Endothelial cell of umbilical vein (primary cell): ENCODE measurements at regions of chr1 and their contacts with region 1.

Region 1: DNA sequence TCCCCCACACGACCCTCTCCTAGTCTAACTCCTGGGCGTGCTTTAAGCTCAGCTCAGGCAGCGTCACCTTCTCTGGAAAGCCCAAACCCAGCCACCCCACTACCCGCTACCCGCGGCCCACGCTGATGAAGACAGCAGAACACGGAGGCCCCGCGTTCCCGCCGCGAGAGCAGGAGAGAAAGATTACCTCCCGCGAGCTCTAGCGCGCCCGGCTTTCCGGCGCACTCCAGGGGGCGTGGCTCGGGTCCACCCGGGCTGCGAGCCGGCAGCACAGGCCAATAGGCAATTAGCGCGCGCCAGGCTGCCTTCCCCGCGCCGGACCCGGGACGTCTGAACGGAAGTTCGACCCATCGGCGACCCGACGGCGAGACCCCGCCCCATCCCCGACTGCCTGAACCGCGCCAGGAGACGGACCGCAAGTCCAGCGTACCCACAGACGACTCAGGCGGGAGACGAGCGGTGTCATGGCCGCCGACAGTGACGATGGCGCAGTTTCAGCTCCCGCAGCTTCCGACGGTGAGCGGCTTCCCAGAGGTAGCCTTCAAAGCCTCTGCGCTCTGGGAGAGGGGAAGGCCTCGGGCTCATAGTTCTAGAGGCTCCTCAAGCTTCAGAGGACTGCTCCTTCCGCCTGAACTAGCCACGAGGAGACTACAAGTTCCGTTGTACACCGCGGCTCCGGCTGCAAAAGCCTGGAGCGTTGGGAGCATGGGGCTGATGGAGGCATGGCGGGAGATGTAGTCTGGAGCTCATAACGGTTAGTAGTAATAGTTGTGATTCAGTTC is at the starts of genes MUTYH and TOE1:
- DNase-seq: peak; percentile 94
- H3K4me3 ChIP-seq: peak within 1 kb of the TSS; percentile 48 to 82 (median 56)
- H3K27ac ChIP-seq: peak within 1 kb of the TSS; percentile 85
- H3K4me1 ChIP-seq: peaks cover 22% of the 10 kb centered on the region
- H3K27me3 ChIP-seq: no peaks in the 10 kb centered on the region
- CTCF ChIP-seq: no peak
- POLR2A ChIP-seq: peak; percentile 72
- total RNA-seq, gene MUTYH: 14.3 and 16.6 TPM in 2 replicates
- total RNA-seq, gene TOE1: 15.8 and 16.3 TPM in 2 replicates

Region 2: GRCh38 chr1:45018599-45019230 is 321.3 kb before region 1 on chr1:
- CTCF ChIA-PET with region 1: interaction called, 35 read pairs
- POLR2A ChIA-PET with region 1: interaction called, 11 read pairs
- dilution Hi-C with region 1: no loop called
- intact Hi-C with region 1: loop called (anchors 1 kb)
- DNase-seq: peak; percentile 63
- H3K4me3 ChIP-seq: no peak overlapping the region
- H3K27ac ChIP-seq: no peak overlapping the region
- H3K4me1 ChIP-seq: peaks cover 3% of the 10 kb centered on the region
- H3K27me3 ChIP-seq: no peaks in the 10 kb centered on the region
- CTCF ChIP-seq: peak; percentile 78 to 93
- POLR2A ChIP-seq: no peak

Region 3: GRCh38 chr1:45326627-45327623 is 13.1 kb before region 1 on chr1 and contains the start of gene HPDL:
- CTCF ChIA-PET with region 1: interaction called, 12 read pairs
- POLR2A ChIA-PET with region 1: interaction called, 18 read pairs
- dilution Hi-C with region 1: no loop called
- intact Hi-C with region 1: loop called (anchors 1 kb)
- DNase-seq: peak; percentile 53
- H3K4me3 ChIP-seq: peak within 1 kb of the TSS; percentile 12 to 48 (median 43)
- H3K27ac ChIP-seq: peak within 1 kb of the TSS; percentile 24
- H3K4me1 ChIP-seq: peaks cover 18% of the 10 kb centered on the region
- H3K27me3 ChIP-seq: no peaks in the 10 kb centered on the region
- CTCF ChIP-seq: no peak
- POLR2A ChIP-seq: peak; percentile 71
- total RNA-seq, gene HPDL: 5.6 and 5.9 TPM in 2 replicates

Region 4: GRCh38 chr1:45359882-45360513 is 20.0 kb after region 1 on chr1:
- CTCF ChIA-PET with region 1: interaction called, 22 read pairs
- POLR2A ChIA-PET with region 1: interaction called, 3 read pairs
- dilution Hi-C with region 1: no loop called
- intact Hi-C with region 1: no loop called
- DNase-seq: peak; percentile 74
- H3K4me3 ChIP-seq: no peak overlapping the region
- H3K27ac ChIP-seq: no peak overlapping the region
- H3K4me1 ChIP-seq: peaks cover 7% of the 10 kb centered on the region
- H3K27me3 ChIP-seq: no peaks in the 10 kb centered on the region
- CTCF ChIP-seq: peak; percentile 47 to 64
- POLR2A ChIP-seq: no peak

Region 5: GRCh38 chr1:45499415-45499769 is 159.4 kb after region 1 on chr1:
- CTCF ChIA-PET with region 1: no interaction called
- POLR2A ChIA-PET with region 1: interaction called, 11 read pairs
- dilution Hi-C with region 1: no loop called
- intact Hi-C with region 1: loop called (anchors 1 kb)
- DNase-seq: peak; percentile 12
- H3K4me3 ChIP-seq: peak overlapping the region; percentile 23 to 80 (median 54)
- H3K27ac ChIP-seq: no peak overlapping the region
- H3K4me1 ChIP-seq: peaks cover 11% of the 10 kb centered on the region
- H3K27me3 ChIP-seq: no peaks in the 10 kb centered on the region
- CTCF ChIP-seq: no peak
- POLR2A ChIP-seq: no peak